H1 (cell line): ENCODE measurements at regions of chr1 and their contacts with region 1.

Region 1: GRCh38 chr1:201481761-201482493 is 12.9 kb upstream of the PHLDA3 start:
- DNase-seq: peak; percentile 88 to 96
- H3K4me3 ChIP-seq: peak overlapping the region; percentile 31 to 65 (median 38); a peak in 7 of 8 replicates
- H3K27ac ChIP-seq: no peak overlapping the region
- H3K4me1 ChIP-seq: peaks cover 0 to 5% (median 2%) of the 10 kb centered on the region in 4 experiments; a peak in 4 of 7 replicates
- H3K27me3 ChIP-seq: peaks cover 0 to 12% (median 7%) of the 10 kb centered on the region in 4 experiments; a peak in 6 of 7 replicates
- CTCF ChIP-seq: peak; percentile 94 to 98 (median 95)
- EP300 ChIP-seq: peak in 1 of 2 experiments; percentile 3; a peak in 1 of 3 replicates
- POLR2A ChIP-seq: no peak
- RAD21 ChIP-seq: peak; percentile 96 to 97

Region 2: DNA sequence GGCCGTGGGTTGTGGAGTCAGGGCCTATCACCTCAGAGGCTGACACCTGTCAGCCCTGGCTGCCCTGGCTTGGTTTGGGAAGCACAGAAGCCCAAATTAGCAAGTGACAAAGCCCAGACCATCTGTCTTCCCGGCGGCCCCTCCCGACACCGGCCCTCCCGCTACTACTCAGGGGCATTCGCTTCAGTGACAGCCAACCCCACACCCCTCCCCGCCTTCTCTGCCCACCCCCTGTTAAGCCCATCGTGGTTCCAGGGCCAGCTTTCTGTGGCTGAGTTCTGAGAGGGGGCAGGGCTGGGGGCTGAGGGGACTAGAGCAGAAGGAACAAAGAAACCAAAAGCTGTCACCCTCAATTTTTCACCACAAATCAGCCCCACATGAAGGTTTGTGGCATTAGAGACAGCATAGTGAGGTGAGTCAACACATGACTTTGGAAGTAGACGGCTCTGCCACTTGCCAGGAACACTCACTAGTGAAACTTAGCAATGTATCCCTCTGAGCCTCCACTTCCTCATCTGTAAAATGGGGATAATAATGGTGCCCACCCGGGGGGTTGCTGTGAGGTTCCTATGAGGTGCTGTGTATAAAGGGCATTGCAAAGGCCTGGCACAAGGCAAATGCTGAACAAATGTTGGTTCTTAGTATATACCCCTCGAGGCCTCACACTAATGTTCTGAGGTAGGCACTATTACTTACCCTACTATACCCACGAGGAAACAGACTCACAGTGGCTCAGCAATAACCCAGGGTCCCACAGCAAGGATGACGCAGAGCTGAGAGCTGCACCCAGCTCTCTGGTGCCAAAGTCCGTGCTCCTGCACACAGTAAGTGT is 55.2 kb before region 1 on chr1:
- CTCF ChIA-PET with region 1: interaction called, 24 read pairs
- POLR2A ChIA-PET with region 1: no interaction called
- DNase-seq: no peak
- H3K4me3 ChIP-seq: no peak overlapping the region
- H3K27ac ChIP-seq: no peak overlapping the region
- H3K4me1 ChIP-seq: peaks cover 0 to 2% (median 0%) of the 10 kb centered on the region in 4 experiments; a peak in 1 of 7 replicates
- H3K27me3 ChIP-seq: no peaks in the 10 kb centered on the region
- CTCF ChIP-seq: no peak
- EP300 ChIP-seq: no peak
- POLR2A ChIP-seq: no peak
- RAD21 ChIP-seq: no peak

Region 3: GRCh38 chr1:201456499-201457309 is 25.2 kb before region 1 on chr1:
- CTCF ChIA-PET with region 1: interaction called, 171 read pairs
- POLR2A ChIA-PET with region 1: no interaction called
- DNase-seq: no peak
- H3K4me3 ChIP-seq: no peak overlapping the region
- H3K27ac ChIP-seq: no peak overlapping the region
- H3K4me1 ChIP-seq: peaks cover 2 to 9% (median 5%) of the 10 kb centered on the region in 4 experiments
- H3K27me3 ChIP-seq: no peaks in the 10 kb centered on the region
- CTCF ChIP-seq: no peak
- EP300 ChIP-seq: no peak
- POLR2A ChIP-seq: no peak
- RAD21 ChIP-seq: no peak

Region 4: GRCh38 chr1:201506556-201507359 is 24.8 kb after region 1 on chr1 and contains the start of gene CSRP1:
- CTCF ChIA-PET with region 1: interaction called, 445 read pairs
- POLR2A ChIA-PET with region 1: interaction called, 30 read pairs
- DNase-seq: no peak
- H3K4me3 ChIP-seq: peak within 1 kb of the TSS; percentile 36 to 61 (median 43)
- H3K27ac ChIP-seq: no peak within 1 kb of the TSS
- H3K4me1 ChIP-seq: peaks cover 8 to 24% (median 16%) of the 10 kb centered on the region in 4 experiments
- H3K27me3 ChIP-seq: peaks cover 3 to 33% (median 21%) of the 10 kb centered on the region in 4 experiments
- CTCF ChIP-seq: peak in 1 of 3 experiments; percentile 8; a peak in 1 of 4 replicates
- EP300 ChIP-seq: no peak
- POLR2A ChIP-seq: 0 out of 3 replicates have a peak, but pooled peaks of 1 of the 2 experiments have one; percentile 37
- RAD21 ChIP-seq: no peak
- total RNA-seq, gene CSRP1: 22.3 and 24.1 TPM in 2 replicates

Region 5: GRCh38 chr1:201538612-201539551 is 57.0 kb after region 1 on chr1 and contains the start of gene NAV1:
- CTCF ChIA-PET with region 1: interaction called, 91 read pairs
- POLR2A ChIA-PET with region 1: no interaction called
- DNase-seq: peak in 1 of 2 experiments; percentile 80
- H3K4me3 ChIP-seq: peak within 1 kb of the TSS; percentile 46 to 83 (median 72)
- H3K27ac ChIP-seq: no peak within 1 kb of the TSS
- H3K4me1 ChIP-seq: peaks cover 2 to 5% (median 3%) of the 10 kb centered on the region in 4 experiments; a peak in 5 of 7 replicates
- H3K27me3 ChIP-seq: peaks cover 2 to 36% (median 29%) of the 10 kb centered on the region in 4 experiments
- CTCF ChIP-seq: no peak
- EP300 ChIP-seq: no peak
- POLR2A ChIP-seq: no peak
- RAD21 ChIP-seq: no peak
- total RNA-seq, gene NAV1: 42.7 and 43.6 TPM in 2 replicates

Region 6: DNA sequence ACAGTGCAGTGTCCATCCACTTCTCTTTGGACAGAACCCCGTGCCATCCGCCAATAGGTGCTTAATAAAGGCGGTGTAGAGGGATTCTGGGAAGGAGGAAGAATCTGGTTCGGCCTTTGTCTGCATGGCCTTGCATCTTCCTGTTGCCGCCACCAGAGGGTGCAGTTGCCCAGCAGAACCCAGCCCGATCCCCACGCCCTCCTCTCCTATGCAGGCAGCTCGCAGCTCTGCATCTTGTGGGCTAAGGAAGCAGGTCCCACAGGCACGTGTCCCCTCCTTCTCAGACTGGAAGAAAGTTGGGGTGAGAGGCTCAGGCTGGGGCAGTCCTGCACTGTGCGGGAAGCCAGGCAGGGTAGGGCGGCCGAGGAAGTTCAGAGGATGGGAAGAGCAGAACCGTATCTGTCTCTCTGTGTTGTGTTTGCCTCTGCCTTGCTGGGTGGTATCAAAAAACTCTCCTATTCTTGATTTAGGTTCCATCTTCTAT is 77.8 kb after region 1 on chr1:
- CTCF ChIA-PET with region 1: interaction called, 43 read pairs
- POLR2A ChIA-PET with region 1: no interaction called
- DNase-seq: peak; percentile 72 to 88
- H3K4me3 ChIP-seq: no peak overlapping the region
- H3K27ac ChIP-seq: no peak overlapping the region
- H3K4me1 ChIP-seq: peaks cover 0 to 8% (median 3%) of the 10 kb centered on the region in 4 experiments; a peak in 4 of 7 replicates
- H3K27me3 ChIP-seq: 0 out of 7 replicates have a peak, but pooled peaks cover 0 to 2% (median 0%) of the 10 kb centered on the region in 4 experiments
- CTCF ChIP-seq: peak; percentile 95 to 99 (median 98)
- EP300 ChIP-seq: 0 out of 3 replicates have a peak, but pooled peaks of 1 of the 2 experiments have one; percentile 20
- POLR2A ChIP-seq: no peak
- RAD21 ChIP-seq: peak; percentile 100